ENCODE measurements at regions of chr10 and their contacts with region 1.

Region 1: GRCh38 chr10:119315128-119316001 is 108.0 kb downstream of the GRK5 start:
- DNase-seq: peak; percentile 90
- H3K4me3 Mint-ChIP-seq: no peak overlapping the region
- H3K27ac Mint-ChIP-seq: peak overlapping the region; percentile 93
- H3K4me1 Mint-ChIP-seq: peaks cover 57% of the 10 kb centered on the region
- H3K27me3 Mint-ChIP-seq: no peaks in the 10 kb centered on the region

Region 2: GRCh38 chr10:118259288-118259906 is 1056.0 kb before region 1 on chr10:
- CTCF ChIA-PET with region 1: no interaction called
- intact Hi-C with region 1: no loop called
- DNase-seq: peak; percentile 63
- H3K4me3 Mint-ChIP-seq: no peak overlapping the region
- H3K27ac Mint-ChIP-seq: no peak overlapping the region
- H3K4me1 Mint-ChIP-seq: no peaks in the 10 kb centered on the region
- H3K27me3 Mint-ChIP-seq: peaks cover 35% of the 10 kb centered on the region

Region 3: DNA sequence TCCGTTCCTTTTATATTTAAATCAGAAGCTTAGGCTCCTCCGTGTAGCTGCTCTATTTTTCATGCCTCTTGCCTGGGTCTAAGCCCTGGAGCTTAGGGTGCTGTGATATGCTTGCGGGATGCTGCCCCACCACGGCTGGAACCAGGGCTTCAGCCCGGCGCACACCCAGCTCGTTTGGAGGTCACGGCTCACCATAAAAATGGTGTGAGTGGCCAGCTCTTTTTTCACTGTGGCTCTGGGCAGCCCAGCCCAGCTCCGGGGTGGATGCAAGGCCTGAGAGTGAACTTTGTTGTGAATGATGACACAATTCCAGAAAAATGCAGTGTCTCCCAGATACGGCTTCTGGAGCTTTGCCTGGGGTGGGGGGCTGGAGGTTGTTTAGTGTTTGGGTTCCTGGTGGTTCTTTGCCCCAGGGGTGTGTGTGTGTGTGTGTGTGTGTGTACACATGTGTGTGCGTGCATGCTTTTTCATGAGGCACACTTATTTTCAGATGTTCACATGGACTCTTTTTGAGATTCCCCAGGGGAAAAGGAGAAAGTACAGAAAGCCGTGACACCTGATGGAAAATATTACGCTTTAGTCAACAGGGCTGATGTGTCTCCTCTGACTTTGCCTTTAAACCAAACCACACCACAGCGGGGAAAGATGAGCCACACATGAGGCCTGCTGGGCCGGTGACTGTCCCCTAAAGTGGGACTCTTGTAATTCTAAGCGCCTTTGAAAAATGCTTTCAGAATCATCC is 61.8 kb before region 1 on chr10:
- CTCF ChIA-PET with region 1: no interaction called
- intact Hi-C with region 1: loop called (anchors 1 kb)
- DNase-seq: peak; percentile 82
- H3K4me3 Mint-ChIP-seq: no peak overlapping the region
- H3K27ac Mint-ChIP-seq: peak overlapping the region; percentile 88
- H3K4me1 Mint-ChIP-seq: peaks cover 55% of the 10 kb centered on the region
- H3K27me3 Mint-ChIP-seq: no peaks in the 10 kb centered on the region

Region 4: DNA sequence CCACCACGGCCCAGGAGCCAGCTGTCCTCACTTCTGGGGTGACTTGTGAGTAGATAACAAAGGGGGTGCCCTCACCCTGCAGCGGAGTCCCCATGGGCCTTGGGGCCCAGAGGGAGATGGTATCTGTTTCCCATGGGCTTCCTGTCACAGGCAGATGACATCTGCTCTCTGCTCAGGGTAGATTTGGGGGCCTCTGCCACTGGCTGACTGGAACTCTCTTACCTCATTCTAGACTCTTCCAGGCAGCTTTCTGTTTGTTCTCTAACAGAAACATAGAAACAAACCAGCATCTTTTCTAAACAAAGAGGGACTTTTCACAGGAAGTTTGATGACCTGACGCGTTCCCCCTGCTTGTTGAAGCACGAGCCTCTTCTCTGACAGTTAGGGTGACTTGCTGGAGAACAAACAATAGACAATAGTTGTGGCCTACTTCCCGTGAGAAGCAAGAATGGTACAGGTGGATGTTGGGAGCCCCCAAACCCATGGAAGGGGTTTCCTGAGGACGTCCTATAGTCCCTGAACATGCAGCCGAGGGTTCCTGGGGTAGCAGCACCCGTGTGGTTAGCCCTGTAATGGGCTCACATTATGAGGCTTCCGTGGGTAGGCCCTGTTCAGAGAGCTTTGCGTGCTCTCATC is 46.4 kb before region 1 on chr10:
- CTCF ChIA-PET with region 1: no interaction called
- intact Hi-C with region 1: loop called (anchors 1 kb)
- DNase-seq: peak; percentile 89
- H3K4me3 Mint-ChIP-seq: peak overlapping the region; percentile 39
- H3K27ac Mint-ChIP-seq: peak overlapping the region; percentile 93
- H3K4me1 Mint-ChIP-seq: peaks cover 52% of the 10 kb centered on the region
- H3K27me3 Mint-ChIP-seq: no peaks in the 10 kb centered on the region

Region 5: GRCh38 chr10:119333146-119333792 is 17.9 kb after region 1 on chr10:
- CTCF ChIA-PET with region 1: interaction called, 7 read pairs
- intact Hi-C with region 1: loop called (anchors 1 kb)
- DNase-seq: peak; percentile 79
- H3K4me3 Mint-ChIP-seq: no peak overlapping the region
- H3K27ac Mint-ChIP-seq: no peak overlapping the region
- H3K4me1 Mint-ChIP-seq: peaks cover 16% of the 10 kb centered on the region
- H3K27me3 Mint-ChIP-seq: no peaks in the 10 kb centered on the region

Region 6: GRCh38 chr10:119370111-119370741 is 54.9 kb after region 1 on chr10:
- CTCF ChIA-PET with region 1: no interaction called
- intact Hi-C with region 1: loop called (anchors 1 kb)
- DNase-seq: peak; percentile 15
- H3K4me3 Mint-ChIP-seq: no peak overlapping the region
- H3K27ac Mint-ChIP-seq: no peak overlapping the region
- H3K4me1 Mint-ChIP-seq: peaks cover 33% of the 10 kb centered on the region
- H3K27me3 Mint-ChIP-seq: no peaks in the 10 kb centered on the region